Heart left ventricle (tissue), 16 donors: ENCODE measurements at regions of chr1 and their contacts with region 1.

Region 1: DNA sequence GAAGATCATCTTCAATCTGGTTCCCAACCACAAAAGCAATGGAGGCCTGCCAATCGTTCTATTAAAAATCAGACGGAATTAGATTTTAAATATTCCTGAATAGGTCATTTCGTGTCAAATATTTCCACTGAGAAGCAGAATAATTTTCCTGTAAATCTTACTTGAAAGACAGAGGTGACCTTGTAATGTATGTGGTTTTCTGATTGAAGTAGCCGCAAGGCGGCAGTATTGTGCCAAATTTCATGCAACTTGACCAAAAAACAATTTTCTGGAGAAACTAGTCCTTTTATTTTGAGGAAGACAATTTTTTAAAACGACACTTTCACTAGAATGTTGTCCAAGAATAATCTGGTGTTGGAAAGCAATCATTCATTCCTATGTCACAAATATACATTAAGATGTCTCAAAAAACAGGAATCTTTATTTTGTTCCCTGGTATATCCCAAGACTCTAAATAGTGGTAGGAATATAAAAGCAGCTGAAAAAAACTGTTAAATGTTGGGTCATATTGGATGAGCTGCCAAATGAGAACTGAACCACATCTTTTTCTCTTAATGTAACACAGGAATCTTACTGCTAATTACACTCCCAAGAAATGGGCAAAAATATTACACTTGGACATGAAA is 33.6 kb downstream of the SPAG17 start:
- DNase-seq: peak in 2 of 5 donors; percentile 34 to 46
- ATAC-seq: peak in 1 of 4 donors; percentile 33
- H3K4me3 ChIP-seq: no peak overlapping the region
- H3K27ac ChIP-seq: no peak overlapping the region
- H3K4me1 ChIP-seq: no peaks in the 10 kb centered on the region
- H3K27me3 ChIP-seq: no peaks in the 10 kb centered on the region
- CTCF ChIP-seq: peak; percentile 44 to 74 (median 64)
- POLR2A ChIP-seq: no peak

Region 2: DNA sequence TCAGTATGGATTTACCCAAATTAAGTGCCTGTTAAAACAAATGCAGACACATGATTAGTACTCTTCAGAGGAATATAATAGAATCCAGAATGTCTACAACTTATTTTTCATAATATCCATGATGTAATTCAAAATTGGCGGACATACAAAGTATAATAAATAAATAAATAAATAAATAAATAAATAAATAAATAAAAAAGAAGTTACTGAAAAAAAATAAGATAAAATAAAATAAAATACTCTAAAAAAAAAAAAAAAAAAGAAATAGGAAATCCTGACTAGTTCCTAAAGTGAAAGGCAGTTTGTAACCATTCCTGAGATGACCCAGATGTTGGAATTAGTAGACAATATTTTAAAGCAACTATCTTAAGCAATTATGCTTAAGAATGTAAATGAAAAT is 252.6 kb after region 1 on chr1:
- intact Hi-C with region 1: no loop called
- DNase-seq: no peak
- ATAC-seq: no peak
- H3K4me3 ChIP-seq: no peak overlapping the region
- H3K27ac ChIP-seq: no peak overlapping the region
- H3K4me1 ChIP-seq: no peaks in the 10 kb centered on the region
- H3K27me3 ChIP-seq: no peaks in the 10 kb centered on the region
- CTCF ChIP-seq: no peak
- POLR2A ChIP-seq: no peak

Region 3: GRCh38 chr1:118485757-118486156 is 334.3 kb after region 1 on chr1:
- intact Hi-C with region 1: no loop called
- DNase-seq: no peak
- ATAC-seq: no peak
- H3K4me3 ChIP-seq: no peak overlapping the region
- H3K27ac ChIP-seq: no peak overlapping the region
- H3K4me1 ChIP-seq: no peaks in the 10 kb centered on the region
- H3K27me3 ChIP-seq: no peaks in the 10 kb centered on the region
- CTCF ChIP-seq: no peak
- POLR2A ChIP-seq: no peak

Region 4: DNA sequence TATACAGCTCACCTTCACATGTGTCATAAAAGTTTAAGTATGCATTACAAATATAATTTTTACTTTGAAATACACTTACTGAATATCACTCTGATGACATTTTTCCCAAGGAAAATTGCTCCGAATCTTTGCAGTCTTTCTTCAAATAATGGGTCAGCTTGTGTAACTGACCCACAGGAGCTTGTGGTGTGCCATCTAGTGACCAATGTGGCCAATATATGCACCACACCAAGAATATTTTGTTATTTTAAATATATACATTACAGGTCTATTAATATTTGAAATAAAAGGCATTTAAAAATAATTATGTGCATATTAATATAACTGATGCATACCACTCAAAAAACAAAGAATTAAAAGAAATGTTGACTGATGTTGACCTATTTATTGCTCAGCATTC is 565.4 kb after region 1 on chr1:
- intact Hi-C with region 1: loop called in 2 of 10 experiments (anchors 10 kb)
- DNase-seq: no peak
- ATAC-seq: no peak
- H3K4me3 ChIP-seq: no peak overlapping the region
- H3K27ac ChIP-seq: no peak overlapping the region
- H3K4me1 ChIP-seq: peaks cover 0 to 8% (median 0%) of the 10 kb centered on the region in 12 donors
- H3K27me3 ChIP-seq: no peaks in the 10 kb centered on the region
- CTCF ChIP-seq: peak in 6 of 12 donors; percentile 12 to 42 (median 26)
- POLR2A ChIP-seq: no peak

Region 5: DNA sequence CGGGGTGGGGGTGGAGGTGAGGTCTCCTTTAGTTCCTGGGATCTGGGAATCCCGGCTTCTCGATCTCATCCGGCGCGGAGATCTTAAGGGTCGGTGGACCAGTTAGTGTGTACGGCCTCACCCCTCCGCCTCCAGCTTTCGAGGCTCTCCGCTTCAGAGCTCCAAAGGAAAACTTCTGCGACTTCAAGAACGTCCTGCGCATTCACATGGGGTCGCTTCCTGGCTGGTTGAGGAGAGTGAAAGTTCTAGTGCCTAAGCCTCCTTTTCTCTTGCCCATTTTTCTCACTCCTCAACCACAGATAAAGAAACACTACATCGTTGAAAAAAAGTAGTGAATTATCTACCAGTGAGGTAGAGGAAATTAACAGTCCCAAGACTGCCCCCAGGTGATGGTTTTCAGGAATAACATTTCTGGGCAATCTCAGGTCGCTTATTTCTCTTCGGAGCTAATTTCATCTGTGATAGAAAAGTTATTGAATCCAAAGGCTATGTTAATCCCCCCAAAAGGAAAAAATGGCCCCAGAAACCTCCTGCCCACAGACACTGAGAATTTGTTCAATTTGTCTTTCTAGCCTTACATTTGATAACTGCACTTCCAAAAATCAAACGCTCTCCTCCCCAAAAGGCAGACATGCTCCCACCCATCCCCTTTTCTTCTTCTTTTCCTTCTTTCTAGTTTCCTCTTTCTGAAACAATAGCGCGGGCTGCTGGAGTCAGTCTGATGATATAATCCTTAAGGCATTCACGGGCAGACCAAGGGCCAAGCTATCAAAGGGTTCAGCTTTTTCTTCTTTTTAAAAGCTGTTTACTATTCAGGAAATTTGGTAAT is 857.3 kb after region 1 on chr1:
- intact Hi-C with region 1: loop called (anchors 2 to 10 kb)
- DNase-seq: no peak
- ATAC-seq: peak in 3 of 4 donors; percentile 44 to 85 (median 73)
- H3K4me3 ChIP-seq: peak overlapping the region; percentile 8 to 46 (median 32)
- H3K27ac ChIP-seq: no peak overlapping the region
- H3K4me1 ChIP-seq: peaks cover 0 to 32% (median 17%) of the 10 kb centered on the region in 12 donors
- H3K27me3 ChIP-seq: peaks cover 30 to 68% (median 53%) of the 10 kb centered on the region in 9 donors
- CTCF ChIP-seq: peak; percentile 48 to 73 (median 60)
- POLR2A ChIP-seq: no peak

Region 6: GRCh38 chr1:119358636-119359035 is 1207.2 kb after region 1 on chr1:
- intact Hi-C with region 1: loop called in 3 of 10 experiments (anchors 5 to 10 kb)
- DNase-seq: no peak
- ATAC-seq: no peak
- H3K4me3 ChIP-seq: no peak overlapping the region
- H3K27ac ChIP-seq: no peak overlapping the region
- H3K4me1 ChIP-seq: no peaks in the 10 kb centered on the region
- H3K27me3 ChIP-seq: peaks cover 0 to 10% (median 0%) of the 10 kb centered on the region in 9 donors
- CTCF ChIP-seq: no peak
- POLR2A ChIP-seq: no peak

Region 7: GRCh38 chr1:119367427-119368124 is 1216.2 kb after region 1 on chr1:
- intact Hi-C with region 1: loop called in 7 of 10 experiments (anchors 5 to 10 kb)
- DNase-seq: no peak
- ATAC-seq: peak in 1 of 4 donors; percentile 28
- H3K4me3 ChIP-seq: no peak overlapping the region
- H3K27ac ChIP-seq: no peak overlapping the region
- H3K4me1 ChIP-seq: no peaks in the 10 kb centered on the region
- H3K27me3 ChIP-seq: peaks cover 0 to 5% (median 0%) of the 10 kb centered on the region in 9 donors
- CTCF ChIP-seq: peak; percentile 60 to 88 (median 74)
- POLR2A ChIP-seq: no peak

Region 8: DNA sequence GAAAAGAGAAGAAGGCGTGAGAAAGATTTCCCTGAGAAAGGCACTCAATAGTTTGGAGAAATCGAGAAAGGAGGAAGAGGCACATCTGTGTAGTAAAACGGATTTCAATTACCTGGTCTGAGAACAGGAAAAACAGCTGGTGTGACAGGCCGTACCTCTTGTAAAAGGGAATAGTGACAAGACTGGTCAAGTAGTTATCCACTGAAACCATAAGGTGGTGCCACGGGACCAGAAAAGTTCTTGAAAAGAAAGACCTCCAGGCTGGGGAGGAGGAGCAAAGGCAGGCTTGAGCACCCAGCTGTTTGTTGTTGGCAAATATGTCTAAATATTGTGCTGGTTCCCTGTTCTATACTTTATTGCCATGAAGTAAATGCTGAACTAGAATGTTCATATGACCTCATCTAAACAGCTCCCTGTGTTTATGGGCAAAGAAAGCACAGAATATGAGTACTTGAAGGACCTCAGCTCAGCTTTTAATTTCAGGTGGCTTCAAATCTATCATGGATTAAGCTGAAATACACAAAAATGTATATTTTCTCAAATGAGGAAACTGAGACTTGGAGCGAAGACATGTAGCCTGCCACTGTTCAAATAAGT is 1221.2 kb after region 1 on chr1:
- intact Hi-C with region 1: loop called in 6 of 10 experiments (anchors 5 to 10 kb)
- DNase-seq: peak in 1 of 5 donors; percentile 11
- ATAC-seq: no peak
- H3K4me3 ChIP-seq: no peak overlapping the region
- H3K27ac ChIP-seq: no peak overlapping the region
- H3K4me1 ChIP-seq: no peaks in the 10 kb centered on the region
- H3K27me3 ChIP-seq: peaks cover 0 to 5% (median 0%) of the 10 kb centered on the region in 9 donors
- CTCF ChIP-seq: peak in 5 of 12 donors; percentile 14 to 30 (median 26)
- POLR2A ChIP-seq: no peak